Activated CD8-positive, alpha-beta T cell treated with anti-CD3 and anti-CD28 coated beads for 36 hours (primary cell): ENCODE measurements at regions of chr1 and their contacts with region 1.

Region 1: DNA sequence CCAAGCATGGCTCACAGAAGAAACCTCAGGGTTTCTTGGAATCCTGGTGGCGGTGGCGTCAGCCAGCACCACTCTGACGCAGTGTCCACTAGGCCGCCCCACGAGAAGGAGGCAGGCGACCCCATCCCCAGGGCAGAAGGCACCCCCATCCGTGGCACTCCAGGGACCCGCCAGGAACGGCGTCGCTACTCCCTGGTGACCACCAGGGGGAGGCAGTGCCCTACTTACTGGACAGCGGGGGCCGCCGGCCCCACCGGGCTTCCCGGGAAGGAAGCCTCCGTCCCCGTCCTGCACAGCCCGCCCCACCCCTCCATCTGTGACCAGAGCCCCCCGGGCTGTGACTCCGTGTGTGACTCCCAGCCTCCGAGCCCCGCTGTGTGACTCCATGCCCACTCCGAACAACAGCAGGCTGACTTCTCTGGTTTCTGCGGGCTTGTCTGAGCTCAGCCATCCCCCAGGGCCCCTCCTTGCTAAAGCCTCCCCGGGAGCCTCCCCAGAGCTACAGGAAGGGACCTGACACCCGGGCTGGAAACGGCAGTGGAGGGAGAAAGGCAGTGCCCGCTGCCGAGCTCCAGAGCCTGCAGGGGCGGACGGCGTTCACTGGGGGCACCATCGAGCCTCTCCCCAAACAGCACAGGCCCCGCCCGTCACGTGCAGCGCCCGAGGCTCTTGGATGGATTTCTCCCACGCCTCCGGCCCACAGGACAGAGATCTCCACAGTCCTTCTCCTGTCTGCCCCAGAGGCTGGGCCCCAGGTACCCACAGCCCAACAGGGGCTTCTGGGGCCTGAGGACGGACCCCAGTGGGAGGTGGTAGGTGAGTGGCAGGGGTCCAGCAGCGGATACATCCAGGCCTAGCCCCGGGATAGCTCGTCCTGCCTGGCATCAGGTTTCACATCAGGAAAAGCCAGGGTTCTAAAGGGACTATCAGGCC is 21.1 kb downstream of the KIF17 start:
- DNase-seq: peak; percentile 84
- ATAC-seq: peak; percentile 96
- H3K4me3 Mint-ChIP-seq: peak overlapping the region; percentile 79
- H3K27ac Mint-ChIP-seq: peak overlapping the region; percentile 70
- H3K4me1 Mint-ChIP-seq: no peaks in the 10 kb centered on the region
- H3K27me3 Mint-ChIP-seq: no peaks in the 10 kb centered on the region
- CTCF ChIP-seq: peak; percentile 98

Region 2: GRCh38 chr1:20711285-20712214 is 14.9 kb after region 1 on chr1:
- CTCF ChIA-PET with region 1: interaction called, 26 read pairs
- POLR2A ChIA-PET with region 1: no interaction called
- intact Hi-C with region 1: no loop called
- DNase-seq: no peak
- ATAC-seq: peak; percentile 49
- H3K4me3 Mint-ChIP-seq: no peak overlapping the region
- H3K27ac Mint-ChIP-seq: no peak overlapping the region
- H3K4me1 Mint-ChIP-seq: no peaks in the 10 kb centered on the region
- H3K27me3 Mint-ChIP-seq: peaks cover 12% of the 10 kb centered on the region
- CTCF ChIP-seq: no peak

Region 3: GRCh38 chr1:20717452-20718342 is 21.0 kb after region 1 on chr1 and contains the start of gene KIF17:
- CTCF ChIA-PET with region 1: interaction called, 16 read pairs
- POLR2A ChIA-PET with region 1: no interaction called
- intact Hi-C with region 1: no loop called
- DNase-seq: peak; percentile 56
- ATAC-seq: peak; percentile 67
- H3K4me3 Mint-ChIP-seq: peak within 1 kb of the TSS; percentile 37
- H3K27ac Mint-ChIP-seq: no peak within 1 kb of the TSS
- H3K4me1 Mint-ChIP-seq: no peaks in the 10 kb centered on the region
- H3K27me3 Mint-ChIP-seq: peaks cover 28% of the 10 kb centered on the region
- CTCF ChIP-seq: no peak
- total RNA-seq, gene KIF17: not detected

Region 4: DNA sequence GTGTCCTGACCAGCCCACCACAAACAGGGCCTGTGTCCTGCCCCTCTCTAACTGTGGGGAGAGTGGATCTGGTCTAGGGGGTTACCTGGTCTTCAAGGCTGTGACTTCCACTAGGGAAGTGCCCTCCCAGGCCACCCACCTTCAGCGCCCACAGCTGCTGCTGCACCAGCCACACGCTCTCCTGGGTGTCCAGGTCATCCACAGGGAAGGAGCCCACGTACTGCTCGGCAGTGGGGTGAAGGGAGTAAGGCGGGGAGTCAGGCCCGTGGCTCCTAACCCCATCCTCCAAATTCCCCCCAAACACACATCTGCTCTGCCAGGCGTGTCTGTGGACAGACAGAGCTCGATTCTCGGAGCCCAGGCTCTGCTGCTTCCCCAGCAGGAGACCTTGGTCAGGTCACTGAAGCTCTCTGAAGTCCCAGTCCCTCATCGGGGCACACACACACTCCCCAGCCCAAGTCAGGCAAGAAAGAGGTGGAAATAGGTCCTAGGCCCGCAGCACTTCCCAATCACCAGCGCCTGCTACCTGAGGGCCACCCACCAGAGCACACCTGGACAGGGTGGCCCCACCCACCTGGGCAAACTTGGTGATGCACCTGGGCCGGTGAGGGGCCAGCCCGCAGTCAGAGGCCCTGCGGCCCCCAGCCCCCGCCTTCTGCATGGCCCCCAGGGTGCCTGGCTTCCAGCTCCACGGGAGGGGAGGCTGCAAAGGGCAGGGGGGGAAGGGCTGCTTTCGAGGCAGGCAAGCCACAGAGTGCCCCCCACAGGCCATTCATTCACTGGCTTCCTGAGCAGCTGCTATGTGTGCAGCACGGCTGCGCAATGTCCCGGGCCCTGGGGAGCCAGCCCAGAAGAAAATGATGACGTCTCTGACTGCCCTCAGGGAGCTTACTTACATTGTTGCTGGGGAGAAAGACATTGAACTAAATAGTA is 31.0 kb after region 1 on chr1:
- CTCF ChIA-PET with region 1: interaction called, 19 read pairs
- POLR2A ChIA-PET with region 1: no interaction called
- intact Hi-C with region 1: no loop called
- DNase-seq: peak; percentile 44
- ATAC-seq: no peak
- H3K4me3 Mint-ChIP-seq: no peak overlapping the region
- H3K27ac Mint-ChIP-seq: no peak overlapping the region
- H3K4me1 Mint-ChIP-seq: peaks cover 8% of the 10 kb centered on the region
- H3K27me3 Mint-ChIP-seq: peaks cover 26% of the 10 kb centered on the region
- CTCF ChIP-seq: no peak

Region 5: DNA sequence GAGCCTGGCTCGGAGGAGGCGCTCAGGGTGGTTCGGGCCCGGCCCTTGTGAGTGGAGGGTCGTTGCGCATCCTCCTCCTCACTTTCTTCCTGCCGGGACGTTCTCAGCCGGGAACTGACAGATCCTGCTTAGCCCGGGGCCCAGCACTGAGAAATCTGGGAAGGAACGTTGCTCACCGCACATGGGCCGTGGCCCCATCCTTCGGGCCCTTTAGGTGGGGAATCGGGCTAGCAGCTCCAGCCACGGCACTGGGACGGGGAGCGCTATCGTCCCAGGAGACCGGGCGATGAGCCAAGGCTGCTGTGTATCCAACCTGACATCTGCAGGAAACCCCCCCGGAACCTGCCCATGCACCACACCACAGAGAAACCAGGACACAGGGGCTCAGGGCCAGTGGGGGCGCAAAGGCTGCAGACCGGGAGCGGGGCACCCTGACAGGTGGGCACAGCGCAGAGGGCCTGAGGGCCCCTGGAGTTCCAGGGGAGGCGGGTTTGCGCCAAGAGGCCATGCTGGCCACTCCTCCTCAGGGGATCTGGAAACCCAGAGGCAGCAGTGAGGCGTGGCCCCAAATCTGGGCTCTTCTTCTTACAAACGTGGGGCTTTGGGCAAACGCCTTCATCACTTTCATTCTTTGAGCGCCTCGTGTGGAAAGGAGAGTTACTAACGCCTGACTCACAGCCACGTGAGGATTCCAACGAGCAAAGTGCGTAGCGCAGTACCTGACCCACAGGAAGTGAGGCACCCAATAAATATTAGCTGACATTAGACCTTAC is 36.1 kb after region 1 on chr1 and contains the start of gene SH2D5:
- CTCF ChIA-PET with region 1: interaction called, 19 read pairs
- POLR2A ChIA-PET with region 1: no interaction called
- intact Hi-C with region 1: no loop called
- DNase-seq: peak; percentile 90
- ATAC-seq: peak; percentile 81
- H3K4me3 Mint-ChIP-seq: peak within 1 kb of the TSS; percentile 79
- H3K27ac Mint-ChIP-seq: peak within 1 kb of the TSS; percentile 66
- H3K4me1 Mint-ChIP-seq: peaks cover 15% of the 10 kb centered on the region
- H3K27me3 Mint-ChIP-seq: peaks cover 26% of the 10 kb centered on the region
- CTCF ChIP-seq: peak; percentile 42
- total RNA-seq, gene SH2D5: 1.3 to 1.6 TPM

Region 6: DNA sequence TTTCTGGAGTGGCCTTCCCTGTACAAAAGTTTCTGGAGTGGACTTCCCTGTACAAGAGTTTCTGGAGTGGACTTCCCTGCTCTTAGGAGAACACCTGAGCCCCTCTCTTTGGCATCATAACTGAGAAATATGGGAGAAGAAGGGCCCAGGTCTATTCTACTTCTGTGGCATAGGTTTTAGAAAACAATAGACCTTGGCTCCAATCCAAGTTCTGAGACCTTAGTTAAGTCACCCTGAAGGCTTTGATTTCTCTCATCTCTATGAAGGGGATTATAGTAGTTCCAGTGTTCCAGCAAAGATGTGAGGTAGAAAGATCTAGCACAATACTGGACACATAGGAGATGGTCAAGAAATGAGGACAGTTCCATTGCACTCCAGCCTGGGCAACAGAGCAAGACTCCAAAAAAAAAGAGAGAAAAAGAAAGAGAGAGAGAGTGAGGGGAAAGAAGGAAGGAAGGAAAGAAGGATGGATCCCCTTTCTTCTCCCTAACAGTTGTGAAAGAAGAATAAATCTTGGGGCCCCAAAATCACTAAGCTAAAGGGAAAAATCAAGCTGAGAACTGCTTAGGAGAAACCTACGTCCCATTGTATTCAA is 493.3 kb after region 1 on chr1:
- CTCF ChIA-PET with region 1: interaction called, 104 read pairs
- POLR2A ChIA-PET with region 1: no interaction called
- intact Hi-C with region 1: loop called (anchors 10 kb)
- DNase-seq: no peak
- ATAC-seq: no peak
- H3K4me3 Mint-ChIP-seq: no peak overlapping the region
- H3K27ac Mint-ChIP-seq: no peak overlapping the region
- H3K4me1 Mint-ChIP-seq: no peaks in the 10 kb centered on the region
- H3K27me3 Mint-ChIP-seq: peaks cover 4% of the 10 kb centered on the region
- CTCF ChIP-seq: no peak